Endothelial cell of umbilical vein (primary cell): ENCODE measurements at regions of chr6 and their contacts with region 1.

Region 1: GRCh38 chr6:135506270-135506997 is 8.9 kb upstream of the AHI1 start:
- DNase-seq: peak; percentile 61
- H3K4me3 ChIP-seq: no peak overlapping the region
- H3K27ac ChIP-seq: no peak overlapping the region
- H3K4me1 ChIP-seq: no peaks in the 10 kb centered on the region
- H3K27me3 ChIP-seq: no peaks in the 10 kb centered on the region
- CTCF ChIP-seq: peak; percentile 32 to 39
- POLR2A ChIP-seq: no peak

Region 2: GRCh38 chr6:135451693-135452092 is 54.7 kb before region 1 on chr6:
- CTCF ChIA-PET with region 1: no interaction called
- POLR2A ChIA-PET with region 1: no interaction called
- dilution Hi-C with region 1: no loop called
- intact Hi-C with region 1: loop called (anchors 2 kb)
- DNase-seq: peak; percentile 63
- H3K4me3 ChIP-seq: no peak overlapping the region
- H3K27ac ChIP-seq: no peak overlapping the region
- H3K4me1 ChIP-seq: no peaks in the 10 kb centered on the region
- H3K27me3 ChIP-seq: no peaks in the 10 kb centered on the region
- CTCF ChIP-seq: peak; percentile 35 to 42
- POLR2A ChIP-seq: no peak